ENCODE measurements at regions of chr3 and their contacts with region 1.

Region 1: GRCh38 chr3:20320489-20320888 is 134.5 kb upstream of the SGO1 start:
- DNase-seq: no peak
- ATAC-seq: no peak
- H3K4me3 ChIP-seq: no peak overlapping the region
- H3K4me1 ChIP-seq: no peaks in the 10 kb centered on the region
- CTCF ChIP-seq: no peak

Region 2: DNA sequence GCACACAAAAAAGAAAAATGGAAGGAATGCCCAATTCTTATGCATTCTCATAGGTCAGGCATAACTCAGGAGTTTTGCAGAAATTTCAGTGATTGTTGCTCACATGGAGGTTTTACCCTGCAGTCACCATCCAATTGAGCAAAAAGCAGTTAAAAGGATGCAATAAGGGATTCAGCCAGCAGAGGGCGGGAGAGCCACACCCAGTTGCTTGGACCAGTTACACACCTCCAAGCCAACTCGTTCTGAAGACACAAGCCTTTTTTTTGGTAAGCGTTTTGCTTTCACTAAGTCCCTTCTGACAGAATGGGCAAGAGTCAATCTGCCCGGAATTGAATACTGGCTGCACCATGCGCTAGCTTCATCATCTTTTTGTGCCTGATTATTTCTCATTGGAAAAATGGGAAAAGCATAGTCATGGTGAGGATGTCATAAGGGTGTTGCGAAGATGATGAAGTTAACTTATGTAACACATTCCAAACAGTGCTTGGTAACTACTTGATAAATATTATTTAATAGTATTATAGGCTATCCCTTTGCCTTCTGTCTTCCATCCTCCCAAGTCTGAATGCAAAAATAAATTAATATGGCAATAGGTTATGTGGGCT is 19.9 kb after region 1 on chr3:
- intact Hi-C with region 1: loop called in 1 of 2 experiments (anchors 2 kb)
- DNase-seq: peak in 2 of 3 donors; percentile 24 to 81
- ATAC-seq: peak; percentile 81
- H3K4me3 ChIP-seq: no peak overlapping the region
- H3K4me1 ChIP-seq: no peaks in the 10 kb centered on the region
- CTCF ChIP-seq: peak; percentile 72

Region 3: DNA sequence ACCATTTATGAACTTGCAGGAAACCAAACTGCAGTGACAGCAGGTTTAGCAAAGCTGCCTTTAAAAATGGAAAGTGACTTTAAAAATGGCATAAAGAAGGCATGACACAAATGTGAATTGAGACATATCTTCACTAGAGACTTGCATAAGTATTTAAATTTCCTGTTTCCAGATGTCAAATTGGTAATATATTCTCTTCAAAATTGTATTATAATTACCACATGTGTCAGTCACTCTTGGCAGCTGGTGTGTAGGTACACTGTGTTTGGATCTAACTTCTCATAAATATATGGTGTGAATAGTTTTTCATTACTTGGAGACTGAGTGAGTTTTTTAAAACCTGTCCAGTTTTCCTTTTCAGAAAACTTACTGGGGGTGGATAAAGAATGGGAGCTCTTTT is 501.8 kb after region 1 on chr3:
- intact Hi-C with region 1: no loop called
- DNase-seq: no peak
- ATAC-seq: no peak
- H3K4me3 ChIP-seq: no peak overlapping the region
- H3K4me1 ChIP-seq: no peaks in the 10 kb centered on the region
- CTCF ChIP-seq: no peak

Measured in mucosa of descending colon (tissue), 3 donors.